HCT116 (cell line): ENCODE measurements at regions of chr2 and their contacts with region 1.

Region 1: GRCh38 chr2:117771969-117772630 is 42.4 kb upstream of the DDX18 start:
- DNase-seq: peak; percentile 23
- ATAC-seq: no peak
- H3K4me3 ChIP-seq: no peak overlapping the region
- H3K27ac ChIP-seq: no peak overlapping the region
- H3K4me1 ChIP-seq: no peaks in the 10 kb centered on the region
- H3K27me3 ChIP-seq: no peaks in the 10 kb centered on the region
- CTCF ChIP-seq: peak; percentile 19 to 52 (median 32); a peak in 4 of 6 replicates
- POLR2A ChIP-seq: no peak
- RAD21 ChIP-seq: peak; percentile 54

Region 2: DNA sequence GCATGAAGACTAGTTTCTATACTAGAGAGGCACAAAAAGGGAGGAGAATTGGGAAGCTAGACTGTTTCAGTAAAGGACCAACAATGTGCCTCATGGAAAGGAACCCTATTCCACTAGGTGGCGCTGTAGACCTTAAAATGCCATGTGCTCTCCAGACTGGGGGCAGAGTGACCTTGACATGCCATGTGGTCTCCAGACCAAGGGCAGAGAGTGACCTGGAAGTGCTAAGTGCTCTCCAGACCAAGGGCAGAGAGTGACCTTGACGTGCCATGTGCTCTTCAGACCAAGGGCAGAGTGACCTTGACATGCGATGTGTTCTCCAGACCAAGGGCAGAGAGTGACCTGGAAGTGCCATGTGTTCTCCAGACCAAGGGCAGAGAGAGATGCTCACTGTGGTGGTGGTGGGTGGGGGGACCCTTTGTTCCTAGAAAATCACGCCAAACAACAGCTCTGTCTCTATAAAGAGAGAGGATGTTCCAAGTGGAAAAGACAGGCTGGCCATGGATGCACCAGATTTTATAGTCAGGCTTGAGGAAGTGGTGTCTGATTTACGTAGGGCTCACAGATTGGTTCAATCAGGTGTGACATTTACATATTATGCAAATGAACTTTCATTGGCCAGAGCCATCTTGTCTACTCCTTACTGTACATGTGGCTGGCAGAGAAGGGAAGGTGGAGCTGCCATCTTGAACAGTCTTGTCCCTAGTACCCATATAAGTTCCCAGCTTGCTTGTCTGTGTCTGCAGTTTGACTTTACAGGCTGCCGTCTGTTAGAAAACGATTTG is 301.6 kb before region 1 on chr2:
- CTCF ChIA-PET with region 1: no interaction called
- POLR2A ChIA-PET with region 1: no interaction called
- RAD21 ChIA-PET with region 1: no interaction called
- intact Hi-C with region 1: loop called (anchors 5 kb)
- DNase-seq: peak; percentile 6
- ATAC-seq: no peak
- H3K4me3 ChIP-seq: no peak overlapping the region
- H3K27ac ChIP-seq: no peak overlapping the region
- H3K4me1 ChIP-seq: no peaks in the 10 kb centered on the region
- H3K27me3 ChIP-seq: no peaks in the 10 kb centered on the region
- CTCF ChIP-seq: peak in 2 of 3 experiments; percentile 42 to 63; a peak in 4 of 6 replicates
- POLR2A ChIP-seq: no peak
- RAD21 ChIP-seq: peak; percentile 19; the same call in 1 of the 2 replicates

Region 3: DNA sequence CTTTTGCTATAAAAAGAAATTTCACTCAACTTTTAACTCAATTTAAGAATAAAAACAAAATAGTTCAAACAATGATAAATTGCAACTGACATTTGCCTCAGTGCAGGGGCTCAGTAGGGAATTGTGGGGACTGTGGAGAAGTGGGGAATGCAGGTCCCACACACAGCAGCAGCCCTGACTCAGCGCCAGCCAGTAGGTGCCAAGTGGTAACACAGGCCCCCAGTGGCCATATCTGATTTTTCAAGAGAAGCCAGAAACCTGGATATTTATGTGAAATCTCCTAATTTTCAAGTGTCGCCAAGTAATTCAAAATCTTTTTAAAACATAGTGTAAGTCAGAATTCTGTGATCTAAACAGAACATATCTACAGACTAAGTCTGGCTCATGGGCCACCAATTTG is 889.1 kb after region 1 on chr2:
- CTCF ChIA-PET with region 1: no interaction called
- POLR2A ChIA-PET with region 1: no interaction called
- RAD21 ChIA-PET with region 1: no interaction called
- intact Hi-C with region 1: no loop called
- DNase-seq: no peak
- ATAC-seq: peak; percentile 78
- H3K4me3 ChIP-seq: no peak overlapping the region
- H3K27ac ChIP-seq: no peak overlapping the region
- H3K4me1 ChIP-seq: no peaks in the 10 kb centered on the region
- H3K27me3 ChIP-seq: peaks cover 4% of the 10 kb centered on the region; the same call in 1 of the 2 replicates
- CTCF ChIP-seq: peak in 2 of 3 experiments; percentile 26 to 46; a peak in 3 of 6 replicates
- POLR2A ChIP-seq: no peak
- RAD21 ChIP-seq: peak; percentile 15; the same call in 1 of the 2 replicates